ENCODE measurements at regions of chr1 and their contacts with region 1.

Region 1: DNA sequence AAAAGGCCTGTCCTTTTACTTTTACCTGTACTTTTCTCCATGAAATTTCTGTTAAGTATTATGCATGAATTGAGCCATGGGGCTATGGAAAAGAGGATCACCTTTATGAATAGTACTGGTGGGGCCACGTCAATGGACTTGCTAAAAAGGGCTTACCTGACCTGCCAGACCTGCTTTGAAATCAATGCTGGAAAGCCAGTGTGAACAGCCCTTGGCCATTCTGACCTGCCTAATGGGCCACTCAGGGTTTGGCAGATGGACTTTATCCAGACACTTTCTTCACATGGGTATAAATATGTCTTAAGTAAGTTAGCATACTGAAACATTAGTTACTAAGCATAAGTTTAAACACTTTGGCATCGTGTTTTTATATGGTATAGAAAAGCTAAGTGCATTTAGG is 8.3 kb upstream of the GUK1 start:
- DNase-seq: no peak
- H3K4me3 Mint-ChIP-seq: no peak overlapping the region
- H3K27ac Mint-ChIP-seq: no peak overlapping the region
- H3K4me1 Mint-ChIP-seq: peaks cover 2% of the 10 kb centered on the region
- H3K27me3 Mint-ChIP-seq: peaks cover 11% of the 10 kb centered on the region

Region 2: GRCh38 chr1:228037401-228038386 is 94.1 kb before region 1 on chr1:
- CTCF ChIA-PET with region 1: no interaction called
- POLR2A ChIA-PET with region 1: no interaction called
- intact Hi-C with region 1: no loop called
- DNase-seq: peak; percentile 70
- H3K4me3 Mint-ChIP-seq: no peak overlapping the region
- H3K27ac Mint-ChIP-seq: no peak overlapping the region
- H3K4me1 Mint-ChIP-seq: peaks cover 2% of the 10 kb centered on the region
- H3K27me3 Mint-ChIP-seq: peaks cover 25% of the 10 kb centered on the region

Region 3: DNA sequence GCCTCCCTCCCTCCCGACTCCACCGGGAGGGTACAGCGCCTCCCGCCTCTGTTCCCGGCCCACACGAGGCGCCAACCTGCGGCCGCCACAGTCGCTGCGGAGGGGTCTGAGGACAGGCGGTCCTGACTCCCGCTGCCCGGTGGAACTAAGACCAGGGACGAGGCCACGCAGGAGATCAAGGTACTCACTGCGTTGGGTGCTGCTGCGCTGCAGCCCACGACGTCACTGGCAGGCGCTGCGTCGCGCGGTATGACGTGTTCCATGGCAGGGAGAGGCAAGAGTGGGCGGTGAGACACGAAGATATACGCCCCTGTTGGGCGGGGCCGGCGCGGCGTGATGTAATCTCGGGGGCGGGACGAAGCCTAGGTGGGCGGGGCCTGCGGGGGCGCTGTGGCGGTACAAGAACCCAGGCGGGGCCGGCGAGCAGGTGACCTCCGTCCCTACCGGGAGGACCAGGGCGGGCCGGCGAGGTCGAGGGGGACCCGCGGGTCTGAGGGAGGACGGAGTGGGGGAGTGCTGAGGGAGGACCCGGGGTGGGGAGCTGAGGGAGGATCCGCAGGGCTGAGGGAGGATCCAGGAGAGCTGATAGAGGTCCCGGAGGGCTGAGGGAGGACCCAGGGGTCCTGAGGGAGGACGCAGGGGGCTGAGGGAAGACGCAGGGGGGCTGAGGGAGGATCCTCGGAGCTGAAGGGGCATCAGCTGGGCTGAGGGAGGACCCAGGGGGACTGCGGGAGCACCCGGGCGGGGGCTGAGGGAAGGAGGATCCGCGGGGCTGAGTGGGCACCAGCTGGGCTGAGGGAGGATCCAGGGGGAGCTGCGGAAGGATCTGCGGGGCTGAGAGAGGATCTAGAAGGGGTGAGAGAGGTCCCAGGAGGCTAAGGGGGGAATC is 22.4 kb before region 1 on chr1 and contains the start of gene MRPL55:
- CTCF ChIA-PET with region 1: interaction called, 11 read pairs
- POLR2A ChIA-PET with region 1: no interaction called
- intact Hi-C with region 1: no loop called
- DNase-seq: peak; percentile 99
- H3K4me3 Mint-ChIP-seq: peak within 1 kb of the TSS; percentile 89
- H3K27ac Mint-ChIP-seq: peak within 1 kb of the TSS; percentile 84
- H3K4me1 Mint-ChIP-seq: peaks cover 25% of the 10 kb centered on the region
- H3K27me3 Mint-ChIP-seq: no peaks in the 10 kb centered on the region
- total RNA-seq, gene MRPL55: 51.1 to 52.7 TPM

Region 4: DNA sequence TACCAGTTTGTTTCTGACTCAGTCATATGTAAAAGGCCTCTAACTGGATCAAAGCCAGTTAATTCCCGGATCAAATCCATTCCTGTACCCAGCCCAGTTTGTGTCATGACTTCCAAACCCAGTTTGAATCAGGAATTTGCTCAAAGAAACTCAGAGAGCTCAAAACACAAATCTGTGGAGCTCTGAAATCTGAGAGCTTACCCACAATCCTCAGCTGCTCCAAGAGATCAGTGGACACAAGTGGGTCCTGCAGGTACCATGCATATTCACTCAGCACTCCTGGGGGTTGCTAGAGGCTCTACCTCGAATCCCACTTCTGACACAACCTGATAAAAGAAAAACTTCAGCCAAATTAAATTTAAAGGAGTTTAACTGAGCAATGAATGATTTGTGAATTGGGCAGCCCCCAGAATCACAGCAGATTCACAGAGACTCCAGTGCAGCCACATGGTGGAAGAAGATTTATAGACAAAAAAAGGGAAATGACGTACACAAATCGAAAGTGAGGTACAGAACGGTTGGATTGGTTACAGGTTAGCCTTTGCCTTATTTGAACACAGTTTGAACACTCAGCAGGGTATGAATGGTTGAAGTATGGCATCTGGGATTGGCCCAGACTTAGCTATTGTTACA is 10.8 kb before region 1 on chr1:
- CTCF ChIA-PET with region 1: interaction called, 11 read pairs
- POLR2A ChIA-PET with region 1: no interaction called
- intact Hi-C with region 1: no loop called
- DNase-seq: no peak
- H3K4me3 Mint-ChIP-seq: peak overlapping the region; percentile 45
- H3K27ac Mint-ChIP-seq: no peak overlapping the region
- H3K4me1 Mint-ChIP-seq: no peaks in the 10 kb centered on the region
- H3K27me3 Mint-ChIP-seq: no peaks in the 10 kb centered on the region

Region 5: GRCh38 chr1:228226956-228227791 is 95.4 kb after region 1 on chr1:
- CTCF ChIA-PET with region 1: no interaction called
- POLR2A ChIA-PET with region 1: no interaction called
- intact Hi-C with region 1: no loop called
- DNase-seq: no peak
- H3K4me3 Mint-ChIP-seq: no peak overlapping the region
- H3K27ac Mint-ChIP-seq: no peak overlapping the region
- H3K4me1 Mint-ChIP-seq: no peaks in the 10 kb centered on the region
- H3K27me3 Mint-ChIP-seq: no peaks in the 10 kb centered on the region

Region 6: DNA sequence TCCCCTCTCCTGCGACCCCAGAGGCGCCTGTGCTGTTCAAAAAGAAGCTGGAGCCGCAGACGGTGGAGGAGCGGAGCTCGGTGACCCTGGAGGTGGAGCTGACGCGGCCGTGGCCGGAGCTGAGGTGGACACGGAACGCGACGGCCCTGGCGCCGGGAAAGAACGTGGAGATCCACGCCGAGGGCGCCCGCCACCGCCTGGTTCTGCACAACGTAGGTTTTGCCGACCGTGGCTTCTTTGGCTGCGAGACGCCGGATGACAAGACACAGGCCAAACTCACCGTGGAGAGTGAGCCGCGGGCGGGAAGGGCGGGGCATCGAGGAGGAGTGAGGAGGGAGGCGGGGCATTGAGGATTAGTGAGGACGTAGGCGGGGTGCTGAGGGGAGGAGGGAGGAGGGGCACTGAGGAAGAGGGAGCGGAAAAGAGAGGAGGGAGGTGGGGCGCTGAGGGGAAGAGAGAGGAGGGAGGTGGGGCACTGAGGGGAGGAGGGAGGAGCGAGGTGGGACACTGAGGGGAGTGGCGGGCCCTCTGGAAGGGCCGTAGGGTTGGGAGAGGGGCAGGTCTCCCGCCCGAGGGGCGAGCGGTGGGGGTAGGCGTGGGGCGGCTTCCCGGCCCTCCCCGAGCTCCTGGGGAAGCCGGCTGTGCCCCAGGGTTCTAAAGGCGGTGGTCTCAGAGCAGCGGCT is 144.1 kb after region 1 on chr1:
- CTCF ChIA-PET with region 1: no interaction called
- POLR2A ChIA-PET with region 1: no interaction called
- intact Hi-C with region 1: loop called (anchors 5 kb)
- DNase-seq: peak; percentile 94
- H3K4me3 Mint-ChIP-seq: peak overlapping the region; percentile 70
- H3K27ac Mint-ChIP-seq: no peak overlapping the region
- H3K4me1 Mint-ChIP-seq: peaks cover 6% of the 10 kb centered on the region
- H3K27me3 Mint-ChIP-seq: no peaks in the 10 kb centered on the region